K562 (cell line): ENCODE measurements at regions of chr2 and their contacts with region 1.

Region 1: GRCh38 chr2:55954306-55955035 is 30.9 kb upstream of the EFEMP1 start:
- DNase-seq: no peak
- ATAC-seq: no peak
- H3K4me3 ChIP-seq: no peak overlapping the region
- H3K27ac ChIP-seq: no peak overlapping the region
- H3K4me1 ChIP-seq: no peaks in the 10 kb centered on the region
- H3K27me3 ChIP-seq: no peaks in the 10 kb centered on the region
- CTCF ChIP-seq: no peak
- EP300 ChIP-seq: no peak
- POLR2A ChIP-seq: no peak
- RAD21 ChIP-seq: no peak

Region 2: GRCh38 chr2:55779459-55780421 is 174.7 kb before region 1 on chr2:
- CTCF ChIA-PET with region 1: no interaction called
- POLR2A ChIA-PET with region 1: no interaction called
- in situ Hi-C with region 1: loop called (anchors 10 kb)
- intact Hi-C with region 1: no loop called
- DNase-seq: no peak
- ATAC-seq: no peak
- H3K4me3 ChIP-seq: no peak overlapping the region
- H3K27ac ChIP-seq: no peak overlapping the region
- H3K4me1 ChIP-seq: no peaks in the 10 kb centered on the region; a peak in 2 of 5 replicates
- H3K27me3 ChIP-seq: peaks cover 0 to 3% of the 10 kb centered on the region in 2 experiments; a peak in 1 of 5 replicates
- CTCF ChIP-seq: no peak
- EP300 ChIP-seq: no peak
- POLR2A ChIP-seq: no peak
- RAD21 ChIP-seq: no peak

Region 3: GRCh38 chr2:56034258-56034657 is 79.8 kb after region 1 on chr2:
- CTCF ChIA-PET with region 1: no interaction called
- POLR2A ChIA-PET with region 1: no interaction called
- in situ Hi-C with region 1: no loop called
- intact Hi-C with region 1: no loop called
- DNase-seq: no peak
- ATAC-seq: no peak
- H3K4me3 ChIP-seq: no peak overlapping the region
- H3K27ac ChIP-seq: no peak overlapping the region
- H3K4me1 ChIP-seq: no peaks in the 10 kb centered on the region
- H3K27me3 ChIP-seq: peaks cover 0 to 6% of the 10 kb centered on the region in 2 experiments; a peak in 4 of 5 replicates
- CTCF ChIP-seq: no peak
- EP300 ChIP-seq: no peak
- POLR2A ChIP-seq: no peak
- RAD21 ChIP-seq: no peak

Region 4: GRCh38 chr2:56230171-56230570 is 275.7 kb after region 1 on chr2:
- CTCF ChIA-PET with region 1: no interaction called
- POLR2A ChIA-PET with region 1: no interaction called
- in situ Hi-C with region 1: no loop called
- intact Hi-C with region 1: no loop called
- DNase-seq: no peak
- ATAC-seq: no peak
- H3K4me3 ChIP-seq: no peak overlapping the region
- H3K27ac ChIP-seq: no peak overlapping the region
- H3K4me1 ChIP-seq: no peaks in the 10 kb centered on the region
- H3K27me3 ChIP-seq: no peaks in the 10 kb centered on the region; a peak in 1 of 5 replicates
- CTCF ChIP-seq: no peak
- EP300 ChIP-seq: no peak
- POLR2A ChIP-seq: no peak
- RAD21 ChIP-seq: no peak

Region 5: GRCh38 chr2:56531668-56532420 is 577.4 kb after region 1 on chr2:
- CTCF ChIA-PET with region 1: no interaction called
- POLR2A ChIA-PET with region 1: no interaction called
- in situ Hi-C with region 1: no loop called
- intact Hi-C with region 1: no loop called
- DNase-seq: no peak
- ATAC-seq: no peak
- H3K4me3 ChIP-seq: no peak overlapping the region
- H3K27ac ChIP-seq: no peak overlapping the region
- H3K4me1 ChIP-seq: no peaks in the 10 kb centered on the region
- H3K27me3 ChIP-seq: no peaks in the 10 kb centered on the region
- CTCF ChIP-seq: no peak
- EP300 ChIP-seq: no peak
- POLR2A ChIP-seq: no peak
- RAD21 ChIP-seq: no peak